ENCODE measurements at regions of chr3 and their contacts with region 1.

Region 1: DNA sequence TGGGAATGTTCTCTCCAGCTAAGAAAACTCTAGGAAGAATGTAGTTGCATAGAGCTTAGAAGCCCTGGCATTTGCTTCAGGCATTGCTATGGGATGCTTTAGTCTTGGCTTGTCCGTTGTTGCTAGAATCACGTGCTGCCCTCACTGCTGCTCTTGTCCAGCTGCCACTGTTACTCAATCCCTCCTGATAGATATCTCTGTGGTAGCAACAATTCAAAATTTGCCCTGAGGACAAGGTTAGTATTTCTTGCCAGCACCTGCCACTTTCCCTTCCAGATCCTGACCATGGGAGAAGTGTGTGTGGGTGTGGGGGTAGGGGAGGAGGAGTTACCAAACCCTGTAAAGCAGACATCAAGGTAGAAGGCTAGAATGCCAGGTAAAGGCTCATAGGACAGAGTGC is 113.8 kb downstream of the PPM1L start:
- DNase-seq: no peak
- ATAC-seq: no peak
- H3K4me3 ChIP-seq: no peak overlapping the region
- H3K4me3 Mint-ChIP-seq: no peak overlapping the region
- H3K27ac ChIP-seq: no peak overlapping the region
- H3K27ac Mint-ChIP-seq: no peak overlapping the region
- H3K4me1 ChIP-seq: no peaks in the 10 kb centered on the region
- H3K4me1 Mint-ChIP-seq: no peaks in the 10 kb centered on the region
- H3K27me3 ChIP-seq: no peaks in the 10 kb centered on the region
- H3K27me3 Mint-ChIP-seq: peaks cover 0 to 3% of the 10 kb centered on the region in 2 donors

Region 2: DNA sequence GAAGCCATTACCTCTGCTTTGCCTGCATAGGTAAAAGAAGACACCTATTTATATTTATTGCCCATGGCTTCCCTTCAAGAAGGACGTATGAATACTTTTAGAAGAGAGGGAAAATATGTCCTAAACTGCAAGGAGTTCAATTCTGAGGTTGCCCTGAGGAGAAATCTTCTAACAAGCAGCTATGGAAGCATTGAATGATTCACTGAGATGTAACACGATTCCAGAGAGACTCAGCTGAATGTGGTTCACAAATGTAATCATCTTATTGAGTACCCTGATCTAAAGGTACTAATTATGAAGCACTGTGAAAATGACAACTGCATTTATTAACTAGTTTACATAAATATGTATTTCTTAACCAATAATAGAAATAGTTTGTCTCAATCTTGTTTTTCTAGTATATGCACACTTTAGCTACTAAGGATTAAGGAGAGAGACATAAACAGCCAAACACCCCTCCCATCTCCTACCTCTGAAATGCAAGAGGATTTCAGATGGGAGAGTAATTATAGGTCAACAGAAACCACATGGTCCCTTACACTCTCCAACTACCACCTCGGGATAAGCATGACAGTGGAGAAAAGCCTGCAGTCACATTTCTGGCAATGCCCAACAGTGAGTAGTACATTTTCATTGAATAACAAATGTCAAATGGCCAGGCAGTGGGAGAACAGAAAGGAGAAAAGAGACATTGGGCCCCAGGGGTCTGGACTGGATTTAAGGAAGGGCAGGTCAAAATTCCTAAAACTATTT is 1387.4 kb before region 1 on chr3:
- CTCF ChIA-PET with region 1: interaction called in 1 of 2 experiments, 10 read pairs
- POLR2A ChIA-PET with region 1: no interaction called
- DNase-seq: no peak
- ATAC-seq: no peak
- H3K4me3 ChIP-seq: no peak overlapping the region
- H3K4me3 Mint-ChIP-seq: no peak overlapping the region
- H3K27ac ChIP-seq: no peak overlapping the region
- H3K27ac Mint-ChIP-seq: no peak overlapping the region
- H3K4me1 ChIP-seq: no peaks in the 10 kb centered on the region
- H3K4me1 Mint-ChIP-seq: no peaks in the 10 kb centered on the region
- H3K27me3 ChIP-seq: no peaks in the 10 kb centered on the region
- H3K27me3 Mint-ChIP-seq: no peaks in the 10 kb centered on the region